ENCODE measurements at regions of chr6 and their contacts with region 1.

Region 1: DNA sequence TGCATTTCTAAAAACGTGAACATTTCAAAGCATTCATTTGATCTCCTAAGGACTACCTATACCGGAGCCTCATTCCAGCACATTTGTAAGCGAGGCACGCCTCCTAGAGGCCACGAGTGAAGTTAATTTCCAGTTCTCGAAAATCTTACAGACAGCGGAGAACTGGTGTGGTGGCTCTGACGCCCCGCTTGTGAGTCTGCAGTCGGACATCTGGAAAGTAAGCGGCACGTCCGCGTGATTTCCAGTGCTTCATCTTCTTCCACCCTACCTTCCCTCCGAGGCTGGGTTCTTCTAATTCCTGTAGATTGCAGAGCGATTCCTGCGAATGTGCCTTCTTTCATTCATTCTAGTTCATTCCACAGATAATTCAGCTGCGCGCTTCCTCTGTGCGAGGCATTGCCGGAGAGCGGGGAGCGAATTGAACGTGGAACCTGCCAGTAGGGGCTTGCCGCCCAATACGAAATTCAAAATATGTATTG is 810 bp upstream of the PRIM2 start:
- DNase-seq: peak; percentile 63 to 87 (median 83)
- ATAC-seq: peak; percentile 92
- H3K4me3 ChIP-seq: peak overlapping the region; percentile 84
- H3K4me3 Mint-ChIP-seq: peak overlapping the region; percentile 90 to 100 (median 97)
- H3K27ac ChIP-seq: peak overlapping the region; percentile 66
- H3K27ac Mint-ChIP-seq: peak overlapping the region; percentile 87 to 98 (median 93)
- H3K4me1 ChIP-seq: peaks cover 0 to 9% of the 10 kb centered on the region in 2 donors
- H3K4me1 Mint-ChIP-seq: peaks cover 21 to 38% (median 33%) of the 10 kb centered on the region in 7 donors
- H3K27me3 ChIP-seq: no peaks in the 10 kb centered on the region
- H3K27me3 Mint-ChIP-seq: peaks cover 0 to 6% (median 0%) of the 10 kb centered on the region in 5 donors

Region 2: GRCh38 chr6:56542364-56543331 is 774.0 kb before region 1 on chr6:
- CTCF ChIA-PET with region 1: no interaction called
- POLR2A ChIA-PET with region 1: no interaction called
- intact Hi-C with region 1: loop called (anchors 2 to 10 kb)
- DNase-seq: peak; percentile 32 to 74 (median 59)
- ATAC-seq: peak; percentile 90
- H3K4me3 ChIP-seq: peak overlapping the region; percentile 69
- H3K4me3 Mint-ChIP-seq: no peak overlapping the region
- H3K27ac ChIP-seq: peak overlapping the region; percentile 38
- H3K27ac Mint-ChIP-seq: no peak overlapping the region
- H3K4me1 ChIP-seq: peaks cover 0 to 8% of the 10 kb centered on the region in 2 donors
- H3K4me1 Mint-ChIP-seq: peaks cover 0 to 2% (median 0%) of the 10 kb centered on the region in 7 donors
- H3K27me3 ChIP-seq: no peaks in the 10 kb centered on the region
- H3K27me3 Mint-ChIP-seq: peaks cover 0 to 3% (median 0%) of the 10 kb centered on the region in 5 donors

Region 3: DNA sequence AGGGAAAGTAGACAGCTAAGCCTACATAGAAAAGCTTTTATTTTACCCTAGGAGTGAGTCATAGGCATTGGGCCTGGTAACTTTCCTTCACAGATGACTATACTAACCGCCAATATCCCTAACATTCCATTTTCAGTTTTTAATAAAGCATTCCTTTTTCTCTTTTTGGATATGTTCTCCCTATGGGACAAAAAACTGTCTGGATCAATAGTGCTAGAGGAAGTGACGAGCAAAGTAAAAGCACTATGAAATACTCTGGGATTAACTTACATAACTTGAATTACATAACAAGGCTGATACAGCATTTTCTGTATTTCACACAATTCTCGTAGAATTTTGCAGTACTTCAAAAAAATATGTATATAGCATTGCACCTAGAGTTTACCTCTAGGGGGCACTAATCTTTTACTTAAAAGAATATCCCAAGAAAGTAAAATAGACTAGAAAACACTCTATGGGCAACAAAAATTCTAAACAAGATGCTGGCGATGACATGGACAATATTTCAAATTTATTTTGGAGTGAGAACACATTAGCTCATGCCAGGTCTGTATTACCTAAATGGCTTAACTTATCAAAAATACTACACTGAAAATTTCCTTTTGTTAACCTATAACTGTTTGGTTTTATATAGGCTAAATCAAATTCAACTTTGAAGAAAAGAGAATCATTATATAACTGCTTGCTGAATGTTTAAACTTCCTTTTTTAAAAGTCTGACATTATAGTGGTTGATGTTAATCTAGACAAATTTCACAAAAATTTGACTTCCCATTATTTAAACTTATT is 607.6 kb before region 1 on chr6:
- CTCF ChIA-PET with region 1: no interaction called
- POLR2A ChIA-PET with region 1: no interaction called
- intact Hi-C with region 1: loop called (anchors 1 to 2 kb)
- DNase-seq: peak in 3 of 9 donors; percentile 5 to 30 (median 10)
- ATAC-seq: peak; percentile 36
- H3K4me3 ChIP-seq: no peak overlapping the region
- H3K4me3 Mint-ChIP-seq: no peak overlapping the region
- H3K27ac ChIP-seq: no peak overlapping the region
- H3K27ac Mint-ChIP-seq: no peak overlapping the region
- H3K4me1 ChIP-seq: no peaks in the 10 kb centered on the region
- H3K4me1 Mint-ChIP-seq: no peaks in the 10 kb centered on the region
- H3K27me3 ChIP-seq: no peaks in the 10 kb centered on the region
- H3K27me3 Mint-ChIP-seq: peaks cover 0 to 6% (median 4%) of the 10 kb centered on the region in 5 donors

Region 4: DNA sequence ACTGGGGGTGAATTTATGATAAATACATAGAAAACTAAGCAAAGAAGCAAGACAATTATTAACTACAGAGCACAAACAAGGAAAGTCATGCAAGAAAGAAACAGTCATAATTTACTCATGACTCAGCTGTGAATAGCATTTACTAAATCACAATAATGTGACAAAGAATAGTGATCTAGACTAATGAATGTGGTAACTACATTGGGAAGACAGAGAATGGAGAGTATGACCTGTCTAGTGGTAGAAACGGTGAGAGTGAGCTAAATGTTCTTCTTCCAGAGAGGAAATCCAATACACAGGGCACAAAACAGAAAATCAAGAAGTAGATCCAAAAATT is 520.5 kb before region 1 on chr6:
- CTCF ChIA-PET with region 1: no interaction called
- POLR2A ChIA-PET with region 1: no interaction called
- intact Hi-C with region 1: no loop called
- DNase-seq: no peak
- ATAC-seq: no peak
- H3K4me3 ChIP-seq: no peak overlapping the region
- H3K4me3 Mint-ChIP-seq: no peak overlapping the region
- H3K27ac ChIP-seq: no peak overlapping the region
- H3K27ac Mint-ChIP-seq: no peak overlapping the region
- H3K4me1 ChIP-seq: no peaks in the 10 kb centered on the region
- H3K4me1 Mint-ChIP-seq: no peaks in the 10 kb centered on the region
- H3K27me3 ChIP-seq: no peaks in the 10 kb centered on the region
- H3K27me3 Mint-ChIP-seq: peaks cover 3 to 17% (median 13%) of the 10 kb centered on the region in 5 donors

Region 5: GRCh38 chr6:56902641-56903464 is 413.8 kb before region 1 on chr6:
- CTCF ChIA-PET with region 1: interaction called, 99 read pairs
- POLR2A ChIA-PET with region 1: interaction called, 11 read pairs
- intact Hi-C with region 1: loop called (anchors 1 kb)
- DNase-seq: peak in 6 of 9 donors; percentile 18 to 44 (median 28)
- ATAC-seq: peak; percentile 61
- H3K4me3 ChIP-seq: no peak overlapping the region
- H3K4me3 Mint-ChIP-seq: no peak overlapping the region
- H3K27ac ChIP-seq: no peak overlapping the region
- H3K27ac Mint-ChIP-seq: no peak overlapping the region
- H3K4me1 ChIP-seq: no peaks in the 10 kb centered on the region
- H3K4me1 Mint-ChIP-seq: no peaks in the 10 kb centered on the region
- H3K27me3 ChIP-seq: no peaks in the 10 kb centered on the region
- H3K27me3 Mint-ChIP-seq: peaks cover 4 to 26% (median 6%) of the 10 kb centered on the region in 5 donors

Region 6: DNA sequence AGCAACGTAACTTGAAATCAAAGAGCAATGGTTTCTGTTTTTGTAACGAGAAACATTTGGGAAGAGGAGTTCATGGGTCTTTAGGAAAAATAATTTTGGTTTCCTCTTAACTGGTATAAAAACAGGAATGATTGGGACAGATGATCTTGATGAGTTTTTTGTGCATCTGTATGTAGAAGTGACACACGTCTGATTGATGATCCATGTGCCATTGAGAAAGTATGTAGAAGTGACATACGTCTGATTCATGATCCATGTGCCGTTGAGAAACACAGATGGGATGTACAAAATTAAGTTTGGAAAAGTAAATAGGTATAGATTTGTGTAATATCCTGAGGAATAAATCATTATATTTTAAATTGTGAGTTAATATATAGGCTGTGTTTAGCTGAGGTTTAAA is 268.0 kb before region 1 on chr6:
- CTCF ChIA-PET with region 1: no interaction called
- POLR2A ChIA-PET with region 1: no interaction called
- intact Hi-C with region 1: loop called (anchors 2 kb)
- DNase-seq: no peak
- ATAC-seq: no peak
- H3K4me3 ChIP-seq: no peak overlapping the region
- H3K4me3 Mint-ChIP-seq: peak overlapping the region; percentile 46 to 84 (median 68)
- H3K27ac ChIP-seq: no peak overlapping the region
- H3K27ac Mint-ChIP-seq: peak overlapping the region in 6 of 9 donors; percentile 14 to 75 (median 58)
- H3K4me1 ChIP-seq: peaks cover 0 to 9% of the 10 kb centered on the region in 2 donors
- H3K4me1 Mint-ChIP-seq: peaks cover 21 to 41% (median 32%) of the 10 kb centered on the region in 7 donors
- H3K27me3 ChIP-seq: no peaks in the 10 kb centered on the region
- H3K27me3 Mint-ChIP-seq: peaks cover 0 to 24% (median 0%) of the 10 kb centered on the region in 5 donors

Region 7: DNA sequence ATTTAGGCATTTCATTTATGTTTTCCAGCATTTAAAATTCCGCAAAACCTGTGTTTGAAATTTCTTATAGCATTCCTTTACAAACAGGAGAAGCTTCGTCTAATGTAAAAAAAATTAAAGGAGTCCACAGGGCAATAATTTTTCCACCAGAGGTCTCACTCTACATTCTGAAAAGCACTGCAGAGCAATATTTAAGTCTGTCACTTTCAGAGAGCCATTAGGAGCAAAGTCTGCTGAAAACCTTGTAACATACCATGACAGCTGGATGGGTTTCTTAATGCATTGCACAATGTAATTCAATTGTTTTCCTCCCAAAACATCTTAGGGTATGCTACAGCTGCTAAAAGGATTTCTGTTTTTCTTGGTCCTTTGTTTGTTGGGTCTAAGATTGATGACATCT is 126.5 kb before region 1 on chr6:
- CTCF ChIA-PET with region 1: interaction called, 5 read pairs
- POLR2A ChIA-PET with region 1: interaction called, 3 read pairs
- intact Hi-C with region 1: loop called (anchors 1 kb)
- DNase-seq: peak in 3 of 9 donors; percentile 6 to 15 (median 14)
- ATAC-seq: no peak
- H3K4me3 ChIP-seq: no peak overlapping the region
- H3K4me3 Mint-ChIP-seq: no peak overlapping the region
- H3K27ac ChIP-seq: no peak overlapping the region
- H3K27ac Mint-ChIP-seq: no peak overlapping the region
- H3K4me1 ChIP-seq: no peaks in the 10 kb centered on the region
- H3K4me1 Mint-ChIP-seq: peaks cover 0 to 10% (median 5%) of the 10 kb centered on the region in 7 donors
- H3K27me3 ChIP-seq: no peaks in the 10 kb centered on the region
- H3K27me3 Mint-ChIP-seq: no peaks in the 10 kb centered on the region

Region 8: DNA sequence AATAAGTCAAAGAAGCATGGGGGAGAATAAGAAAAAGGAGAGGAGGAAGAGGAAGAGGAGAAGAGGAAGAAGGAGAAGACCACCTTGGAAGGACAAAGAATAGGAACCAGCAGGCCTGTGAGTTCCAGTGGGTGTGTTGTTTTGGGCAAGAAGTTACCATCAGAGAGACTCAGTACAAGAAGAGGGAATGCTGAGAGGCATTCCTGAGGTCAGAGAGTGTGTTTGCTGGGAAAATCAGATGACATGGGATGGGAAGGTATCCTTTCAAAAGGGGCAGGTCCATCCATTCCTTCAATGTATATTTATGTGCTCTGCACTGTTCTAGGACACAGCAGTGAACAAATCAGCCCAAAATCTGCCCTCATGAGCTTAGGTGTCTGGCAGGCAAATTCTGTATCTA is 39.7 kb before region 1 on chr6:
- CTCF ChIA-PET with region 1: no interaction called
- POLR2A ChIA-PET with region 1: no interaction called
- intact Hi-C with region 1: no loop called
- DNase-seq: no peak
- ATAC-seq: no peak
- H3K4me3 ChIP-seq: no peak overlapping the region
- H3K4me3 Mint-ChIP-seq: no peak overlapping the region
- H3K27ac ChIP-seq: no peak overlapping the region
- H3K27ac Mint-ChIP-seq: no peak overlapping the region
- H3K4me1 ChIP-seq: no peaks in the 10 kb centered on the region
- H3K4me1 Mint-ChIP-seq: no peaks in the 10 kb centered on the region
- H3K27me3 ChIP-seq: no peaks in the 10 kb centered on the region
- H3K27me3 Mint-ChIP-seq: peaks cover 2 to 34% (median 20%) of the 10 kb centered on the region in 5 donors